Heart right ventricle (tissue), 16 donors: ENCODE measurements at regions of chr21 and their contacts with region 1.

Region 1: DNA sequence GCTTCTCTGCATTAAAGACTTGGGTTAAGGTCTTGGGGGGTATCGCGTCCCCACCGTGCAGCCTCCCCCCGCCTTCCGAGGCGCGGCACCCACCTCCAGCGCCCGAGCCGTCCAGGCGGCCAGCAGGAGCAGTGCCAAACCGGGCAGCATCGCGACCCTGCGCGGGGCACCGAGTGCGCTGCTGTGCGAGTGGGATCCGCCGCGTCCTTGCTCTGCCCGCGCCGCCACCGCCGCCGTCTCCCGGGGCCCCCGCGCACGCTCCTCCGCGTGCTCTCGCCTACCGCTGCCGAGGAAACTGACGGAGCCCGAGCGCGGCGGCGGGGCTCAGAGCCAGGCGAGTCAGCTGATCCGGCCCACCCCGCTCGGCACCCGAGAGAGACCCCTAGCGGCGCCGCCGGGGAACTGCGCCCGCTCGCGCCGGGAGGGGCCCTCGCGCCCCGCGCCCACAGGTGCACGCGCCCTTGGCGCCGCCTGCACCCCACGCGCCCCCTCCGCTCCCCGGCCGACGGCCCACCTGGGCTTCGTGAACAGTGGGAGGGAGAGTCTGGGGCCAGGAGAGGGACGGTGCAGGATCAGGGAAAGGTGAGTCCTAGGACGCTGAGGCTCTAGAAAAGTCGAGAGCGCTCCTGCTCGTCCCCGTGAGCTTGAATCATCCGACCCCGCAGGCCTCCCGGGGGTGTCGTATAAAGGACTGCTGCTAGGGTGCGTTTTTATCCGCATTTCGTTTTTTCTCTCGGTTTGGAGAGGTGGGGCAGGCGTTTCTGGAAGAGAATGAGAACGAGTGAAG is at the start of gene APP:
- DNase-seq: peak; percentile 89 to 90
- ATAC-seq: peak; percentile 75 to 92 (median 90)
- H3K4me3 ChIP-seq: peak within 1 kb of the TSS; percentile 70 to 97 (median 88)
- H3K27ac ChIP-seq: peak within 1 kb of the TSS; percentile 76 to 97 (median 93)
- H3K4me1 ChIP-seq: peaks cover 0 to 48% (median 32%) of the 10 kb centered on the region in 9 donors
- H3K27me3 ChIP-seq: no peaks in the 10 kb centered on the region
- CTCF ChIP-seq: peak; percentile 83 to 100 (median 99)
- total RNA-seq, gene APP: 324 to 434 (median 398) TPM

Region 2: DNA sequence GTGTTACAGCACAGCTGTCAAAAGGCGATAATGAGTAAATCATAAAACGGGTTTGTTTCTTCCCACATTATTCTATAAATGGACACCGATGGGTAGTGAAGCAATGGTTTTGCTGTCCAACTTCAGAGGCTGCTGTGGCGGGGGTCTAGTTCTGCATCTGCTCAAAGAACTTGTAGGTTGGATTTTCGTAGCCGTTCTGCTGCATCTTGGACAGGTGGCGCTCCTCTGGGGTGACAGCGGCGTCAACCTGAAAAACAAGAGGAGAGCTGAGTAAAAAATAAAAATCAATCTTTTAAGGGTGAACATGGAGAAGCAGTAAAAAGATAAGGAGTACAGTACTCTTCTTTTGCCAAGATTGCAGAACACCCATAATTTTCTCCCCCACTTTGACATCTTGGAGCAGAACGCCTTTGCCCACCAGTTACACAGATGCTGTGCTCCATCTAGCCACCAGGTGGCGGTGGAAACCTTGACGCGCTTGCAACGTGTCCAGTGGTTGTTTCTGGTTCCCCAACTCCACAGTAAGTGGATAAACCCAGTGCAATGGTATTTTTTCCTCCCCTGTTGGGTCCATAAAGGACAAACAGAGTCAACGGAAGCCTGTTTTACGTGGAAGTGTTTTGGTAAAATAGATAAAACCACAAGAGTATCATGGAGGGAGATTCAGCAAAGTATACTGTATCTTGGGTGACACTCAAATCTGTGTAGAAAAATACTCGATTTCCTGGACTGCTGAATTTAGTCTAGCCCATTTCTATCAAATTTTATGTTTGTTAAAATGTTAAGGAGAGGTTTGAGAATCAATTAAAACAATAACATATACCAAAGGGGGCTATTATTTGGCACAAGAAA is 288.9 kb before region 1 on chr21:
- intact Hi-C with region 1: loop called in 7 of 10 experiments (anchors 5 kb)
- DNase-seq: peak; percentile 63 to 65
- ATAC-seq: peak; percentile 63 to 85 (median 72)
- H3K4me3 ChIP-seq: no peak overlapping the region
- H3K27ac ChIP-seq: no peak overlapping the region
- H3K4me1 ChIP-seq: peaks cover 0 to 17% (median 8%) of the 10 kb centered on the region in 9 donors
- H3K27me3 ChIP-seq: no peaks in the 10 kb centered on the region
- CTCF ChIP-seq: peak; percentile 88 to 98 (median 96)

Region 3: GRCh38 chr21:25895565-25896205 is 275.0 kb before region 1 on chr21:
- intact Hi-C with region 1: loop called in 8 of 10 experiments (anchors 2 to 5 kb)
- DNase-seq: no peak
- ATAC-seq: peak in 7 of 8 donors; percentile 63 to 79 (median 76)
- H3K4me3 ChIP-seq: no peak overlapping the region
- H3K27ac ChIP-seq: peak overlapping the region in 2 of 10 donors; percentile 5 to 9
- H3K4me1 ChIP-seq: peaks cover 0 to 45% (median 13%) of the 10 kb centered on the region in 9 donors
- H3K27me3 ChIP-seq: no peaks in the 10 kb centered on the region
- CTCF ChIP-seq: peak; percentile 47 to 78 (median 64)

Region 4: DNA sequence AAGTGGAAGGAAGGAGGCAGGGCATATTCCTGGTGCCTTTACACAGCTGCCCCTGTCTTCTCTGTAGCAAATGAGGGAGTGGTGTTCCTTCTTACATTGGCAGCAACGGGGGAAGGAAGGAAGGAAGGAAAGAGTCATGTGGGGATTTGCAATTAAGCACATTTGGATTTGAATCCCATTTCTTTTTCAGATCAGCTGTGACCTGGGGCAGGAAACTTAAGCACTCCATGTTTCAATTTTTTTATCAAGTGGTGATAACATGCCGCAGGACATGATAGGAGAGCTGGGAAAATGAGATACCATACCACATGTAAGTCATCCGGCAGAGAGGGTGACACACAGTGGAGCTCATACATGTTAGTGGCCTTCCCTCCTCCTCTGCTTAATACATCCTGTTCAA is 186.9 kb before region 1 on chr21:
- intact Hi-C with region 1: loop called in 3 of 10 experiments (anchors 5 to 10 kb)
- DNase-seq: peak in 1 of 2 donors; percentile 34
- ATAC-seq: peak; percentile 67 to 94 (median 88)
- H3K4me3 ChIP-seq: peak overlapping the region in 2 of 10 donors; percentile 6 to 14
- H3K27ac ChIP-seq: peak overlapping the region in 8 of 10 donors; percentile 9 to 67 (median 53)
- H3K4me1 ChIP-seq: peaks cover 0 to 49% (median 31%) of the 10 kb centered on the region in 9 donors
- H3K27me3 ChIP-seq: no peaks in the 10 kb centered on the region
- CTCF ChIP-seq: no peak

Region 5: GRCh38 chr21:26070822-26071425 is 99.7 kb before region 1 on chr21:
- intact Hi-C with region 1: loop called in 1 of 10 experiments (anchors 10 kb)
- DNase-seq: peak in 1 of 2 donors; percentile 38
- ATAC-seq: peak in 7 of 8 donors; percentile 45 to 78 (median 64)
- H3K4me3 ChIP-seq: peak overlapping the region in 4 of 10 donors; percentile 5 to 25 (median 12)
- H3K27ac ChIP-seq: peak overlapping the region in 3 of 10 donors; percentile 7 to 37 (median 34)
- H3K4me1 ChIP-seq: peaks cover 0 to 55% (median 27%) of the 10 kb centered on the region in 9 donors
- H3K27me3 ChIP-seq: no peaks in the 10 kb centered on the region
- CTCF ChIP-seq: no peak

Region 6: DNA sequence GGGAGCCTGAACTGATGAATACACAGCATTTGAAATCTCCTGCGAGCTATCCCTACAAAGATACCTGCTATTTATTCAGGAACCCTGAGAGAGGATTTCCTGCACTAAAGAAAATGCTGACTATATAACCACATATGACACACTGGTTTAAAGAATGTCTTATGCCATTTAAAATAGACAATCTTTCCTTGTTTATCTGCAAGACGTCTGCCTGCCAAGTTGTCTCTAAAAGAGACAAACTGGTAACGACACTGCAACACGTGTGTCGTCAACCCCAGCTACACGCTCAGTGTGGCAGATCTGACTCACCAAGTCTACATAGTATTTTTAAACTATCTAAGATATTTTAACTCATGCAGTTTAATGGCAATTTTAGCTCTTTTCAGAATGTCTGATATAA is 42.7 kb before region 1 on chr21:
- intact Hi-C with region 1: loop called in 3 of 10 experiments (anchors 5 kb)
- DNase-seq: no peak
- ATAC-seq: peak in 7 of 8 donors; percentile 49 to 84 (median 61)
- H3K4me3 ChIP-seq: peak overlapping the region in 5 of 10 donors; percentile 1 to 30 (median 21)
- H3K27ac ChIP-seq: peak overlapping the region in 7 of 10 donors; percentile 19 to 68 (median 37)
- H3K4me1 ChIP-seq: peaks cover 18 to 95% (median 70%) of the 10 kb centered on the region in 9 donors
- H3K27me3 ChIP-seq: no peaks in the 10 kb centered on the region
- CTCF ChIP-seq: no peak

Region 7: DNA sequence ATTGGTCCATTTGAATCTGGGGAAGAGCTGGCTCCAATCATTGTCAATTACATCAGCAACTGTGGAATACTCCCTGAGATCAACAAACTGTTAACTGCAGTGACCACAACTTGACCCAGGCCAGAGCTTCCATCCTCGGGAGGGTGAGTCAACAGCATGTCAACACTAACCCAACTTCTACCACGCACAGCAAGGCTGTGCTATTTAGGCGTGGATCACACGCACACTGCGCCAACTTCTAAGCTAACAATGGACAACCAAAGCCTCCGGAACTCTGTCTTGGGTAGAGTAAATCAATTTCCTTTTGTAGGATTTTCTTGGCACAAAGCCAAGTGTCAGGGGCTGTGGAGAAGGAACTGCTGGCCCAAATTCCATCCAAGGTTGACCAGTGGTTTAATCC is 30.5 kb before region 1 on chr21:
- intact Hi-C with region 1: no loop called
- DNase-seq: peak; percentile 30 to 42
- ATAC-seq: peak; percentile 51 to 98 (median 84)
- H3K4me3 ChIP-seq: no peak overlapping the region
- H3K27ac ChIP-seq: peak overlapping the region in 4 of 10 donors; percentile 7 to 64 (median 33)
- H3K4me1 ChIP-seq: peaks cover 2 to 57% (median 40%) of the 10 kb centered on the region in 9 donors
- H3K27me3 ChIP-seq: no peaks in the 10 kb centered on the region
- CTCF ChIP-seq: no peak

Region 8: DNA sequence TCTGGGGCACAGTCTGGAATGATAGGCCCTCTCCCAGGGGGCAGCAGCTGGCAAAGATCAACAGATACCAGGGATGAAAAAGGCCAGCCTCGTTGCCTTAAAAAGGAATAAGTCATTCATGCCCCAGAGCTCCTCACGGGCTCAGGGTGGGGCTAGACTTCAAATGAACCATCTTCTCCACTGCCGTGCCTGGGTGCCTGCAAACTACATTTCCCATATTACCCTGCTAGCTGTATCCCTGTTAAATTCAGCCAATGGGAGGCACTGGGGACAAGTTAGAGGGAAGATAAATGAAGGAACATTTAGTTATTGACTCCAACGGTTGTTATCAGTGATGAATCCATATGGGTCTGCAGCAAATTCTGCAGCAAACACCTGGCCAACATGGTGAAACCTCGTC is 503.7 kb after region 1 on chr21:
- intact Hi-C with region 1: no loop called
- DNase-seq: no peak
- ATAC-seq: no peak
- H3K4me3 ChIP-seq: no peak overlapping the region
- H3K27ac ChIP-seq: no peak overlapping the region
- H3K4me1 ChIP-seq: no peaks in the 10 kb centered on the region
- H3K27me3 ChIP-seq: no peaks in the 10 kb centered on the region
- CTCF ChIP-seq: no peak

Region 9: GRCh38 chr21:26715878-26716506 is 545.3 kb after region 1 on chr21:
- intact Hi-C with region 1: loop called in 4 of 10 experiments (anchors 2 to 10 kb)
- DNase-seq: peak in 1 of 2 donors; percentile 48
- ATAC-seq: peak in 6 of 8 donors; percentile 58 to 84 (median 71)
- H3K4me3 ChIP-seq: no peak overlapping the region
- H3K27ac ChIP-seq: no peak overlapping the region
- H3K4me1 ChIP-seq: peaks cover 0 to 6% (median 0%) of the 10 kb centered on the region in 9 donors
- H3K27me3 ChIP-seq: peaks cover 0 to 6% (median 0%) of the 10 kb centered on the region in 7 donors
- CTCF ChIP-seq: peak; percentile 58 to 91 (median 80)